H1 (cell line): ENCODE measurements at regions of chr2 and their contacts with region 1.

Region 1: DNA sequence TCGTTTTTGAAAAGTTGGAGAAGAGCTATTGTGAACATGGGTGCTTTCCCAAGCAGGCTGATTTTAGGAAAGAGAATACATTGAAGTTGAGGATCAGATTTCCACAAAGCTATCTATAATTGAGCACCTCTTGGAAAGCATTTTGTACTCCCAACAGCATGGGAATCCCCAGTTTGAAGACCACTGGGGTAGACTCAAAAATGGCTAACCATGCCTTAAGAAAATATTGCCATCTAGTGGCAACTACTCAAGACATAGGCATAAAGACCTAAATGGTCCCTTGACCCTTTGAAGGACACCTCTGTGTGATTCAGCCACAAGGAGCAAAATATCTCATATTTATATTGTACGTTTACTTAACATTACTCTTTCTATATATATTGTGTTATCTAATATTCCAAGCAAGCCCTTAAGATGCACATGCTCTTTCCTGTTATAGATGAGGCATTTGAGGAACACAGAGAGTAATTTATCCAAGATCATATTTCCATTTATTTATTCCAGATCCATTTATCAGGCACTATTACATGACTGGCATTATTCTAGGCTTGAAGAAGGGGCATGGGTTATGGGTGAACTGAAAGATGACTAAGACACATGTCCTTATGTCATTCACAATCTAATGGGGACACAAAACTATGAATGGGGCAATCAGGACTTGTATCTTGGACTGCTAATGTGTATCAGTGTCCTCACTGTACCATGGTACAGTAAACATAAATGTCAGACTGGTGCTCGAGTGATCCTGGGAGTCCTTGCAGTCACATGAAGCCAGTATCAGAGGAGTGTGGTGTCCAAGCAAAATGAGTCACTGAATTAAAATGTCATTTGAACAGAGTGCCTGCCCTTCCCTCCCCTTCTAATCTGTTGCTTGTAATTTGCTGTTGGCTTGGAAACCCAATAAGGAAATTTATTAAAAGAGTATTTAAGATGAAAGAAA is 121.0 kb upstream of the XPO1 start:
- DNase-seq: peak in 1 of 2 experiments; percentile 9
- H3K4me3 ChIP-seq: no peak overlapping the region
- H3K27ac ChIP-seq: no peak overlapping the region
- H3K4me1 ChIP-seq: no peaks in the 10 kb centered on the region
- H3K27me3 ChIP-seq: no peaks in the 10 kb centered on the region
- CTCF ChIP-seq: peak in 2 of 3 experiments; percentile 51 to 68; a peak in 3 of 4 replicates
- EP300 ChIP-seq: no peak
- POLR2A ChIP-seq: no peak
- RAD21 ChIP-seq: peak; percentile 86 to 90

Region 2: GRCh38 chr2:61557381-61557780 is 101.7 kb before region 1 on chr2:
- CTCF ChIA-PET with region 1: no interaction called
- POLR2A ChIA-PET with region 1: no interaction called
- DNase-seq: no peak
- H3K4me3 ChIP-seq: no peak overlapping the region
- H3K27ac ChIP-seq: no peak overlapping the region
- H3K4me1 ChIP-seq: no peaks in the 10 kb centered on the region
- H3K27me3 ChIP-seq: no peaks in the 10 kb centered on the region
- CTCF ChIP-seq: no peak
- EP300 ChIP-seq: no peak
- POLR2A ChIP-seq: no peak
- RAD21 ChIP-seq: no peak

Region 3: GRCh38 chr2:61645911-61646310 is 13.2 kb before region 1 on chr2:
- CTCF ChIA-PET with region 1: interaction called, 14 read pairs
- POLR2A ChIA-PET with region 1: no interaction called
- DNase-seq: no peak
- H3K4me3 ChIP-seq: no peak overlapping the region
- H3K27ac ChIP-seq: no peak overlapping the region
- H3K4me1 ChIP-seq: no peaks in the 10 kb centered on the region
- H3K27me3 ChIP-seq: no peaks in the 10 kb centered on the region
- CTCF ChIP-seq: no peak
- EP300 ChIP-seq: no peak
- POLR2A ChIP-seq: no peak
- RAD21 ChIP-seq: no peak

Region 4: GRCh38 chr2:61670591-61671501 is 11.7 kb after region 1 on chr2:
- CTCF ChIA-PET with region 1: interaction called, 14 read pairs
- POLR2A ChIA-PET with region 1: no interaction called
- DNase-seq: no peak
- H3K4me3 ChIP-seq: no peak overlapping the region
- H3K27ac ChIP-seq: no peak overlapping the region
- H3K4me1 ChIP-seq: peaks cover 0 to 5% (median 4%) of the 10 kb centered on the region in 4 experiments; a peak in 3 of 7 replicates
- H3K27me3 ChIP-seq: no peaks in the 10 kb centered on the region
- CTCF ChIP-seq: no peak
- EP300 ChIP-seq: no peak
- POLR2A ChIP-seq: no peak
- RAD21 ChIP-seq: no peak